A549 (cell line): ENCODE measurements at regions of chr7 and their contacts with region 1.

Region 1: GRCh38 chr7:101436857-101437576 is 74.3 kb downstream of the COL26A1 start:
- DNase-seq: peak; percentile 34 to 41
- ATAC-seq: peak; percentile 36 to 63; a peak in 4 of 6 replicates
- H3K4me3 ChIP-seq: no peak overlapping the region
- H3K27ac ChIP-seq: no peak overlapping the region
- H3K4me1 ChIP-seq: no peaks in the 10 kb centered on the region
- CTCF ChIP-seq: no peak
- EP300 ChIP-seq: no peak
- POLR2A ChIP-seq: no peak
- RAD21 ChIP-seq: no peak

Region 2: DNA sequence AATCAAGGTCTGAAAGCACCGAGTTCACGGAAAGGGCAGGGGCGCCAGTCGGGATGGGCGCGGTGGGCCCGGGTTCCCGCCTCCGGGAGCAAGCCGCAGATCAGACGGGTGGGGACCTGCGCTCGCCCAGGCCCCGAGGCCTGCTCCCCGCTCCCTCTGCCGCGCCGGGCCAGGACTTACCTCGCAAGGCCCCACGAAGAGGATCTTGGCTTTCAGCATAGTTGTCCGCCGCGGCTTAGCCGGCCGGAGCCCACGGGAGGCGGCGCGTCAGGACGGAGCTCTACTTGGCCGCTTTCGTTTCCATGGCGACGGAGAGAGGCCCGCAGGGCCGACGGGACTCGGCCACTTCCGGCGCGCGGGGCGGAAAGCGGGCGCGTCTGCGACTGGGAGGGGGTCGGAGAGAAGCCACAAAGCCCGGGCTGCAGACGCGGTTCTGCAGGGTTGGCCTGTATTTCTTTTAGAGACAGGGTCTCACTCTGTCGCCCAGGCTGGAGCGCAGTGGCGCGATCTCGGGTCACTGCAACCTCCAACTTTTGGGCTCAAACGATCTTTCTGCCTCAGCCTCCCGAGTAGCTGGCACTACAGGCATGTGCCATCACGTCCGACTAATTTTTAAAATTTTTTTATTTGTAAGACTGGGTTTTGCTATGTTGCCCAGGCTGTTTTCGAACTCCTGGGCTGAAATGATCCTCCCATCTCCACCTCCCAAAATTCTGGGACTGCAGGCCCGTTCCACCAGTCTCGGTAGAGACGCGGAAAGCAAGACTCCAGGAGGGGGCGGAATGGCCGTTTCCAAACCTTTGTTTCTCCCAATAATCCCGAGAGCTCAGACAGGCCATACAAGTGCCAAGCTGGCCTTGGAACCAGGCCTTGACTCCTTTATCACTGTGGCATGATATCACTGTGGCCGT is 115.3 kb before region 1 on chr7 and contains the start of gene IFT22:
- CTCF ChIA-PET with region 1: interaction called, 18 read pairs
- POLR2A ChIA-PET with region 1: interaction called, 8 read pairs
- DNase-seq: peak; percentile 86 to 88
- ATAC-seq: peak; percentile 98 to 99
- H3K4me3 ChIP-seq: peak within 1 kb of the TSS; percentile 77
- H3K27ac ChIP-seq: peak within 1 kb of the TSS; percentile 94 to 95
- H3K4me1 ChIP-seq: peaks cover 6% of the 10 kb centered on the region; the same call in 1 of the 3 replicates
- CTCF ChIP-seq: peak; percentile 65
- EP300 ChIP-seq: no peak
- POLR2A ChIP-seq: peak; percentile 63
- RAD21 ChIP-seq: peak; percentile 69
- polyA plus RNA-seq, gene IFT22: 58.4 and 66.5 TPM in 2 replicates

Region 3: GRCh38 chr7:101373812-101374614 is 63.0 kb before region 1 on chr7:
- CTCF ChIA-PET with region 1: interaction called, 16 read pairs
- POLR2A ChIA-PET with region 1: no interaction called
- DNase-seq: no peak
- ATAC-seq: no peak
- H3K4me3 ChIP-seq: no peak overlapping the region
- H3K27ac ChIP-seq: no peak overlapping the region
- H3K4me1 ChIP-seq: peaks cover 11% of the 10 kb centered on the region; the same call in 1 of the 3 replicates
- CTCF ChIP-seq: no peak
- EP300 ChIP-seq: no peak
- POLR2A ChIP-seq: no peak
- RAD21 ChIP-seq: no peak

Region 4: GRCh38 chr7:101453617-101454016 is 16.6 kb after region 1 on chr7:
- CTCF ChIA-PET with region 1: interaction called, 14 read pairs
- POLR2A ChIA-PET with region 1: no interaction called
- DNase-seq: no peak
- ATAC-seq: no peak
- H3K4me3 ChIP-seq: no peak overlapping the region
- H3K27ac ChIP-seq: no peak overlapping the region
- H3K4me1 ChIP-seq: peaks cover 5% of the 10 kb centered on the region; the same call in 1 of the 3 replicates
- CTCF ChIP-seq: no peak
- EP300 ChIP-seq: no peak
- POLR2A ChIP-seq: no peak
- RAD21 ChIP-seq: no peak